Breast epithelium (tissue), 4 donors: ENCODE measurements at regions of chr1 and their contacts with region 1.

Region 1: DNA sequence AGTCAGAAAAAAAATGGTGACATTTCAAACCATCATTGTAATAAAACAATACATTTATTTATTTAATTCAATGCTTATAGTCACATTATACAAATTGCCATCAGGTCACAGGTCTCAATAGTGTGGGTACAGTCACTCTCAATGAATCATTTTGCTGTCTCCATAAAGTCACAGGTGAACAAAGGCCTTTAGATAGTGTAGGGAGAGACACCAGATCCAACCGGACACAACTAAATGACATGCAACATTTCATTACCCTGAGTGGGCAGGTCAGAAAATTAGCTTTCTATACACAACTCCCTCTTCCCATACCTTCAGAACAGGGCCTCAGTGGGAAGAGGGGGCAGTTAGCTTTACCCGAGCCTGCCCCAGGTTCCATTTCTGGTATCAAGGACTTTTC is 63.2 kb downstream of the STYXL2 start:
- DNase-seq: no peak
- H3K4me3 ChIP-seq: no peak overlapping the region
- H3K27ac ChIP-seq: no peak overlapping the region
- H3K4me1 ChIP-seq: no peaks in the 10 kb centered on the region
- H3K27me3 ChIP-seq: no peaks in the 10 kb centered on the region
- CTCF ChIP-seq: no peak
- POLR2A ChIP-seq: no peak

Region 2: DNA sequence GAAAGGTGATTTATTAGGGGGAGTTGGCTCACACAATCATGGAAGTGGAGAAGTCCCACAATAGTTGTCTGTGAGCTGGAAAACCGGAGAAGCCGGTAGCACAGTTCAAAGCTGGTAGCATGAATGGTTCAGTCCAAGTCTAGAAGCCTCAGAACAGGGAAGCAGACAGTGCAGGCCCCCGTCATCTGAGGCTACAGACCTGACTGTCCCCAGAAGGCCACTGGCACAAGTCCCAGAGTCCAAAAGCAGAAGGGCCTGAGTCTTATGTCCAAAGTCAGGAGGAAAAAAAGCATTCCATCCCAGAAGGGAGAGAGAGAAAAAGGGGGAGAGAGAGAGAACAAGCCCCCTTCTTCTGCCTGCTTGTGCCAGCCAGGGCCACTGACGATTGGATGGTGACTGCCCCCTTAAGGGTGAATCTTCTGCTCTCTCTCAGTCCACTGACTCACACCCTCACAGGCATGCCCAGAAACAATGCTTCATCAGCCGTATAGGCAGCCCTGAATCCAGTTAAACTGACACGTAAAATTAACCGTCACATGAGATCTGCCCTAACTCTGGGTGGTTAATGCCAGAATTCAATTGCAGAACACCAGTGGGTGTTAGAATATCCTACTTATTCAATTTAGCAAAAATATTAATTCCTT is 14.3 kb after region 1 on chr1:
- intact Hi-C with region 1: loop called (anchors 1 kb)
- DNase-seq: no peak
- H3K4me3 ChIP-seq: no peak overlapping the region
- H3K27ac ChIP-seq: no peak overlapping the region
- H3K4me1 ChIP-seq: no peaks in the 10 kb centered on the region
- H3K27me3 ChIP-seq: no peaks in the 10 kb centered on the region
- CTCF ChIP-seq: no peak
- POLR2A ChIP-seq: no peak

Region 3: GRCh38 chr1:167904652-167905130 is 747.6 kb after region 1 on chr1:
- intact Hi-C with region 1: no loop called
- DNase-seq: no peak
- H3K4me3 ChIP-seq: no peak overlapping the region
- H3K27ac ChIP-seq: no peak overlapping the region
- H3K4me1 ChIP-seq: no peaks in the 10 kb centered on the region
- H3K27me3 ChIP-seq: no peaks in the 10 kb centered on the region
- CTCF ChIP-seq: no peak
- POLR2A ChIP-seq: no peak

Region 4: DNA sequence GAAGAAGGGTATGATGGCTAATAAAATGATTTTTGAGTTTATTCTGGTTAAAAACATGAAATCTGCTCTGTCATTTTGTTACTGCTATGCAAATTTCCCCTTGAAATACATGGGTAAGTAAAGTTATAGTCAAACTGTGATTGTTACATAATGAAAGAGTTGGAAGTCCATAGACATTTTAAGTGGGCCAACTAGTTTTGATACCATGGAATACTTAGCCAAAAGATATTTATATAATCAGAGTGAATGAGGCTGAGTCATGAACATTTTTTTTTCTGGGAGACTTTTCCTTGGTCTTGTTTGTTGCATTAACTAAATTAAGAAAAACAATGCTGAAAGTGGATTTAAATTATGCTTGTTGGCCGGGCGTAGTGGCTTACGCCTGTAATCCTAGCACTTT is 837.9 kb after region 1 on chr1:
- intact Hi-C with region 1: no loop called
- DNase-seq: no peak
- H3K4me3 ChIP-seq: no peak overlapping the region
- H3K27ac ChIP-seq: no peak overlapping the region
- H3K4me1 ChIP-seq: no peaks in the 10 kb centered on the region
- H3K27me3 ChIP-seq: no peaks in the 10 kb centered on the region
- CTCF ChIP-seq: no peak
- POLR2A ChIP-seq: no peak